ENCODE measurements at regions of chr12 and their contacts with region 1.

Region 1: DNA sequence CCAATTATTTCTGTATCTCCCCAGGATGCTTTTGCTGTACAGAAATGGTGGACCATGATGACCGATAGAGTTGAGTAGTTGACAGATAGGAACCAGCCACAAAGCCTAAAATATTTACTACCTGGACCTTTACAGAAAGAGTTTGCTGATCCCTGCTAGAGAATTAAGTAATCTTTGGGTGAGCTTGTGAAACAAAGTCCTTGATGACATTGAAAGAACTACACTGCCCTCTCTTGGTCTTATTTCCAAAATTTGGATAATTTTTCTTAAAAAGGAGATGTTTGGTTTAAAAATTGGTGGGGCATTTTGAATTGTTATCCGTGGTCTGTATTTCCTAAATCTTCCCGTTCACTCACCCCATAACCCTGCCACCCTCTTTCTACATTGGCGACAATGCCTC is 13.7 kb upstream of the TCTN1 start:
- DNase-seq: peak; percentile 89
- ATAC-seq: peak; percentile 54
- H3K4me3 ChIP-seq: no peak overlapping the region
- H3K27ac ChIP-seq: no peak overlapping the region
- H3K4me1 ChIP-seq: no peaks in the 10 kb centered on the region
- H3K27me3 ChIP-seq: no peaks in the 10 kb centered on the region
- CTCF ChIP-seq: peak; percentile 85

Region 2: DNA sequence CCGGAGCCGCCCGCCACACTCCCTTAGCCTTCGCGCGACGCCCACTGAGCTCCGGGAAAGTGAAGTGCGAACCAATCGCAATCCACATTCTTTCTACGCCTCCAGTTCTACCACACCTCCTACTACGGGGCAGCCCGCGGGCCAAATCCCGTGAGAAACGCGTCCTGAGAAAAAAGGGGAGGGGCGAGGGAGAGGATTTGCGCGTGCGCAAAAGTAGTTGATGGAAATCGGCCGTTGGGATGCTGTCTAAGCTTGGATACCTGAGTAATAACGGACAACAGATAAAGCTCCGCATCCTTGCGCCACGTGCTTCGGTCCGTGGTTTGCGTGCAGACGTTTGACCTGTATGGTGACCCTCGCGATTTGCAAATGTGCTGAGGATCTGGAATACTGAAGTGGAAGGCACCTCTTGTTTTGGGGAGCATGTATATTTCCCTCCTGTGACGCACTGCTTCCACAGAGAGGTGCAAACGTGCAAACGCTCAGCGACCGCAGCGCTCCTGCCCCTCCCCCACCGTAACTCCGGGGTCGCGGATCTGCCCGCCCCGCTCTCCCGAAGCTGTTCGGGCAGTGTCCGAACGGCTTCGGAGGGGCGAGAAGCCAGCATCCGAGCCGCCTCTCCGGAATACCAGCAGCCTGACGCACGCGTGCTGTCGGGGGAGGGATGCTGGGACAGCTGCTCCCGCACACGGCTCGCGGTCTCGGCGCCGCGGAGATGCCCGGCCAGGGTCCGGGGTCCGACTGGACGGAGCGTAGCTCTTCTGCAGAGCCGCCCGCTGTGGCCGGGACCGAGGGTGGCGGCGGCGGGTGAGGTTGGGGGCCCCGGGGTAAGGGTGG is 131.8 kb before region 1 on chr12 and contains the starts of genes FAM216A and GPN3:
- CTCF ChIA-PET with region 1: interaction called, 10 read pairs
- POLR2A ChIA-PET with region 1: no interaction called
- intact Hi-C with region 1: loop called (anchors 1 kb)
- DNase-seq: peak; percentile 99
- ATAC-seq: peak; percentile 84
- H3K4me3 ChIP-seq: peak within 1 kb of the TSS; percentile 84
- H3K27ac ChIP-seq: peak within 1 kb of the TSS; percentile 75
- H3K4me1 ChIP-seq: peaks cover 14% of the 10 kb centered on the region
- H3K27me3 ChIP-seq: no peaks in the 10 kb centered on the region
- CTCF ChIP-seq: no peak
- total RNA-seq, gene FAM216A: 19.5 and 27.8 TPM in 2 replicates
- total RNA-seq, gene GPN3: 31.4 and 32.5 TPM in 2 replicates

Region 3: GRCh38 chr12:110513842-110514241 is 86.4 kb before region 1 on chr12:
- CTCF ChIA-PET with region 1: interaction called, 16 read pairs
- POLR2A ChIA-PET with region 1: no interaction called
- intact Hi-C with region 1: loop called (anchors 1 kb)
- DNase-seq: no peak
- ATAC-seq: no peak
- H3K4me3 ChIP-seq: no peak overlapping the region
- H3K27ac ChIP-seq: no peak overlapping the region
- H3K4me1 ChIP-seq: peaks cover 5% of the 10 kb centered on the region; the same call in 1 of the 2 replicates
- H3K27me3 ChIP-seq: no peaks in the 10 kb centered on the region
- CTCF ChIP-seq: no peak

Region 4: DNA sequence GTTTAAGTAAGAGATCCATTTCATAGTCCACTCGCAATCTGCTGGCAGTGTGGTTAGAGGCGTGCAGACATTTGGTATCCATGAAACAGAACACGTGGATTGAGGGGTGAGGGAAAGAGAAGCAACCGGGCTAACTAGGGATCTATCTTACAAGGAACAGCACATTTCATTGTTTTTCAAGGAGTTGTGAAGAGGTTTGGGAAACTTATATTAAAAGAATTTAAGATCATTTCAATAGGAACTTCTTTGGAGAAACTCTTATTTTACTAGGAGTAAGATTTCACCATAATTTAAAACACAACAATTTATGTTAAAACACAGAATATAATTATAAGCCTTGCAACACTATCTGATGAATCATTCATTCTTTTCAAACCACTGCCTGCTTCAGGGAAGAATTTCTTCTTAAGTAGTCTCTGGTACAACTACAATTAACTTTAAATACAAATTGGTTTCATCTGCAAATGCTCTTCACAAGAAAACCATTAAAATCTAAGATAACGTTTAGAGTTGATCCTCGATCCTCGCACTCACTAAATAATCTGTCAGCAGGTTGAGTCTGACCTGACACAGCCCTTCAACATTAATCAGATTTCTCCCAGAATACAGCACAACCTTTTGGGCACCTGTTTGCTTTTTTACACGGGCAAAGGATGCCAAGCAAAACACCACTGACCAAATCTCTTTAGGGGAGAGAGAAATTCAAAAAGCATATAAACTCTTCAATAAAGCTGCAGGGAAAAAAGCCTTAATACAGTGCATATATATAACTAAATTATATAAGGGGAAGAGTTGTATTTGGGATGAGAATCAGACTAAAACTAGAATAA is 44.5 kb before region 1 on chr12:
- CTCF ChIA-PET with region 1: interaction called, 14 read pairs
- POLR2A ChIA-PET with region 1: interaction called, 3 read pairs
- intact Hi-C with region 1: loop called (anchors 1 kb)
- DNase-seq: peak; percentile 32
- ATAC-seq: no peak
- H3K4me3 ChIP-seq: no peak overlapping the region
- H3K27ac ChIP-seq: no peak overlapping the region
- H3K4me1 ChIP-seq: peaks cover 20% of the 10 kb centered on the region
- H3K27me3 ChIP-seq: no peaks in the 10 kb centered on the region
- CTCF ChIP-seq: no peak

Region 5: GRCh38 chr12:110794623-110795280 is 194.5 kb after region 1 on chr12:
- CTCF ChIA-PET with region 1: no interaction called
- POLR2A ChIA-PET with region 1: no interaction called
- intact Hi-C with region 1: no loop called
- DNase-seq: no peak
- ATAC-seq: no peak
- H3K4me3 ChIP-seq: no peak overlapping the region
- H3K27ac ChIP-seq: no peak overlapping the region
- H3K4me1 ChIP-seq: no peaks in the 10 kb centered on the region
- H3K27me3 ChIP-seq: no peaks in the 10 kb centered on the region
- CTCF ChIP-seq: no peak

Region 6: GRCh38 chr12:110809149-110809548 is 208.9 kb after region 1 on chr12:
- CTCF ChIA-PET with region 1: interaction called, 11 read pairs
- POLR2A ChIA-PET with region 1: no interaction called
- intact Hi-C with region 1: no loop called
- DNase-seq: no peak
- ATAC-seq: no peak
- H3K4me3 ChIP-seq: no peak overlapping the region
- H3K27ac ChIP-seq: no peak overlapping the region
- H3K4me1 ChIP-seq: no peaks in the 10 kb centered on the region
- H3K27me3 ChIP-seq: peaks cover 28% of the 10 kb centered on the region
- CTCF ChIP-seq: no peak

Measured in PC-3 (cell line).